Activated naive CD4-positive, alpha-beta T cell treated with anti-CD3 and anti-CD28 coated beads for 36 hours (primary cell): ENCODE measurements at regions of chr1 and their contacts with region 1.

Region 1: GRCh38 chr1:2556277-2556677 is at the start of gene TNFRSF14:
- DNase-seq: peak; percentile 81
- H3K4me3 Mint-ChIP-seq: peak within 1 kb of the TSS; percentile 93
- H3K27ac Mint-ChIP-seq: peak within 1 kb of the TSS; percentile 99
- H3K4me1 Mint-ChIP-seq: peaks cover 31% of the 10 kb centered on the region
- H3K27me3 Mint-ChIP-seq: no peaks in the 10 kb centered on the region
- total RNA-seq, gene TNFRSF14: 120 to 123 TPM

Region 2: GRCh38 chr1:2642560-2643413 is 86.5 kb after region 1 on chr1:
- CTCF ChIA-PET with region 1: no interaction called
- intact Hi-C with region 1: loop called (anchors 1 kb)
- DNase-seq: peak; percentile 97
- H3K4me3 Mint-ChIP-seq: peak overlapping the region; percentile 90
- H3K27ac Mint-ChIP-seq: peak overlapping the region; percentile 88
- H3K4me1 Mint-ChIP-seq: peaks cover 6% of the 10 kb centered on the region
- H3K27me3 Mint-ChIP-seq: no peaks in the 10 kb centered on the region

Region 3: DNA sequence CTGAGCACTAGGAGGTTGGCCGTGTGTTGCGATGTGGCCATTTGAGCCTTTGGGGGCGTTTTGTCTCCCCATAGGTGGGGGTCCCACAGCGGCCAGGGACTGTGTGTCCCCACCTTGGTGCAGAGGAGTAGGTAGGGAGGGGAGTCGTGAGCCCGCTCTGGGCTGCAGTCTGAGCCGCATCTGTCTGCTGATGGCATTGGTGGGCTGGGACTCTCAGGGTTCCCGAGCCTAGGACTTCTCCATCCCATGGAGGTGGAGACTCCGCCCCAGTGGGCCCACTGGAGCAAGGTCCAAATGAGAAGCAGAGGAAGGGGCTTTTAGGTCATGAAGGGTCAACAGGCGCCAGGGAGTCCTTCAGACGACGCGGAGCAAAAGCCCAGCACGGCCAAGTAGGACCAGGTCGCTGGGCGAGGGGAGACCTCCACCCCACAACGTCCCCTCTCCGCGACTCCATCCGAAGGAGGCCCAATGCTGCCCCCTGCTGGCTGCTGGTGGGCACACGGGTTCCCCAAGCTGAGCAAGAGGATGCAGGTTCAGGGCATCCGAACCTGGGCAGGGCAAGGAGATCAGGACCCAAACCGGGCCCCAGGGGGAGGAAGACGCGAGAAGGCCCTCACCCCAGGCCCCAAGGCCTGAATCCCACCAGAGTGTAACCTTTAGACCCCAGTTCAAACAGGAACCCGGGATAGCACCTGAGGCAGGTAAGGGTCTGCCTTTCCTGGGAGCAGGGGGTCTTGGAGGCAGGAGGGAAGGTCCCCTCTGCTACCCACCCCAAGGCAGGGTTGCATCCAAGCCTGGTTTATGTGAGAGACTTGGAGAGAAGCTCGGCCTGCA is 230.3 kb after region 1 on chr1:
- CTCF ChIA-PET with region 1: no interaction called
- intact Hi-C with region 1: loop called (anchors 2 kb)
- DNase-seq: peak; percentile 80
- H3K4me3 Mint-ChIP-seq: no peak overlapping the region
- H3K27ac Mint-ChIP-seq: no peak overlapping the region
- H3K4me1 Mint-ChIP-seq: no peaks in the 10 kb centered on the region
- H3K27me3 Mint-ChIP-seq: peaks cover 28% of the 10 kb centered on the region